Natural killer cell (primary cell): ENCODE measurements at regions of chr16 and their contacts with region 1.

Region 1: DNA sequence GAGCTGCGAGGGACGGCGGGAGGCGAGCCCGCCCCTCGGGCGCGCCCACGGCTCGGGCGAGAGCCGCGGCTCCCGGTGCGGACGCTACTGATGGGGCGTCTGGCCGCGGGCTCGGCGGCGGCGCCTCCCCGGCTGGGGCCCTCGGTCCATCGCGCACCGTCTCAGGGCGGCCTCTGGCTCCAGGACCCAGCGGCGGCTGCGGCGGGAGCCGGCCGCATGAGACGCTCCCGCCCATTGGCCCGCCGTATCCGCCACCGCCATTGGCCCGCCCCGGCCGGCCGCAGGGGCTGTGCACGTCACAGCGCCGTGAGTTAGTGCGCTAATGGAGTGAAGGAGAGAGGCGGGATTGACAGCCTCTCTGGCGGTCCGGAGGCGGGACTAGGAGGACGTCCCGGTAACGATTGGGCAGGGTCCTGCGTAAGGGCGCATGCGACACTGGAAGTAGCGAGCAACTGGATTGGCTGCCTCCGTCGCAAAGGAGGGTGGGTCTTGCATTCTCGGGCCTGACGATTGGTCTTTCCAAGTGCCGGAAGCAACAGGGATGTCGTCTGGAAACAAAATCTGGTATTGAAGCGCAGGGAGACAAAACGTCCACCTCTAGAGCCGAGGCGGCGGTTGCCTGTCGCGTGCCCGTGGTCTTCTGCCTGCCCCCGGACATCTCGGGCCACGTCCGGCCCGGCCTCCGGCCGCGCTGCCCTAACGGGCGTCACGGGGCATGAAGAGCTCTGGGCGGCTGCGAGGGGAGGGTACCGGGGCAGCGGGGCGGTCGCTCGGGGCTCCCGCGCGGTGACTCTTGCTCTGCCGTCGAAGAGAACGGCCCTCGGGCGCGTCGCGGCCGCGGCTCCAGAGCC is at the start of gene ANKRD11:
- DNase-seq: peak; percentile 98 to 100
- ATAC-seq: peak; percentile 84 to 95 (median 86)
- H3K4me3 ChIP-seq: peak within 1 kb of the TSS; percentile 51
- H3K4me3 Mint-ChIP-seq: peak within 1 kb of the TSS; percentile 95
- H3K27ac ChIP-seq: peak within 1 kb of the TSS; percentile 78
- H3K27ac Mint-ChIP-seq: peak within 1 kb of the TSS; percentile 97 to 98
- H3K4me1 ChIP-seq: peaks cover 42% of the 10 kb centered on the region
- H3K4me1 Mint-ChIP-seq: peaks cover 41 to 72% of the 10 kb centered on the region in 2 donors
- H3K27me3 ChIP-seq: no peaks in the 10 kb centered on the region
- H3K27me3 Mint-ChIP-seq: no peaks in the 10 kb centered on the region
- CTCF ChIP-seq: no peak
- total RNA-seq, gene ANKRD11: 230 to 299 (median 287) TPM

Region 2: DNA sequence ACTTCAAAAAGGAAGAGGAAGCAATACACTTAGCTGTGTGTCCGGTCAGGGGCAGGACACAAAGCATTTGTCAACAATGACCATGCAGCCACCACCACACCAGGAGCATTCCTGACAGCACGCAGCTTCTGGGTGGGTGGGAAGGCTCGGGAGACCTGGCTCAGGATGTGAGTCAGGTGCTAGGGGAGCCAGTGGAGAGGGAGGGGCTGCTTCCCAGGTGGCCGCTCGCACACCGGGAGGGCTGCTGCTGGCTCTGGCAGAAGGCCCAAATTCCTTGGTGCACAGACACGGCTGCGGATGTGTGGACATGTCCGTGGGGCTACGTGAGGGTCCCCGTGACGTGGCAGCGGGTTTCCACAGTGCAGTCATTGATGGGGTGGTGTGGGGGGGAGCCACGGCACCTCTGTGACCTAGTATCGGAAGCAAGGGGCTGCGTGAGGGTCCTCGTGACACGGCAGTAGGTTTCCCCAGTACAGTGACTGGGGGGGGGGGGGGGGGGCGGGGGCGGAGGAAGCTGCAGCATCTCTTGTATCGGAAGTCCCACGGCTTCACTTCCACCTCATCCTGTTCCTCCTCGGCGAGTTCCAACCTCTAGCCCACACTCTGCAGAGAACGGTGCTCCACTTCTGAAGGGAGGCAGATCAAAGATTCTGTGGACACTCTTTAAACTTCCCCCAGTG is 160.3 kb before region 1 on chr16:
- intact Hi-C with region 1: loop called (anchors 5 kb)
- DNase-seq: peak in 1 of 2 donors; percentile 80
- ATAC-seq: peak; percentile 12 to 42 (median 27)
- H3K4me3 ChIP-seq: no peak overlapping the region
- H3K4me3 Mint-ChIP-seq: peak overlapping the region; percentile 40
- H3K27ac ChIP-seq: peak overlapping the region; percentile 51
- H3K27ac Mint-ChIP-seq: peak overlapping the region; percentile 18 to 70
- H3K4me1 ChIP-seq: peaks cover 89% of the 10 kb centered on the region
- H3K4me1 Mint-ChIP-seq: peaks cover 77 to 78% of the 10 kb centered on the region in 2 donors
- H3K27me3 ChIP-seq: no peaks in the 10 kb centered on the region
- H3K27me3 Mint-ChIP-seq: no peaks in the 10 kb centered on the region
- CTCF ChIP-seq: no peak

Region 3: GRCh38 chr16:89409161-89409711 is 81.4 kb before region 1 on chr16:
- intact Hi-C with region 1: loop called (anchors 5 kb)
- DNase-seq: peak; percentile 63 to 89
- ATAC-seq: peak; percentile 72 to 82 (median 81)
- H3K4me3 ChIP-seq: no peak overlapping the region
- H3K4me3 Mint-ChIP-seq: peak overlapping the region; percentile 75
- H3K27ac ChIP-seq: peak overlapping the region; percentile 81
- H3K27ac Mint-ChIP-seq: peak overlapping the region; percentile 73 to 82
- H3K4me1 ChIP-seq: peaks cover 94% of the 10 kb centered on the region
- H3K4me1 Mint-ChIP-seq: peaks cover 80 to 85% of the 10 kb centered on the region in 2 donors
- H3K27me3 ChIP-seq: no peaks in the 10 kb centered on the region
- H3K27me3 Mint-ChIP-seq: no peaks in the 10 kb centered on the region
- CTCF ChIP-seq: no peak

Region 4: GRCh38 chr16:89507834-89508590 is 17.4 kb after region 1 on chr16 and contains the start of gene SPG7:
- intact Hi-C with region 1: loop called (anchors 1 kb)
- DNase-seq: peak; percentile 95 to 96
- ATAC-seq: peak; percentile 63 to 84 (median 75)
- H3K4me3 ChIP-seq: peak within 1 kb of the TSS; percentile 61
- H3K4me3 Mint-ChIP-seq: peak within 1 kb of the TSS; percentile 86
- H3K27ac ChIP-seq: peak within 1 kb of the TSS; percentile 91
- H3K27ac Mint-ChIP-seq: peak within 1 kb of the TSS; percentile 78 to 87
- H3K4me1 ChIP-seq: peaks cover 44% of the 10 kb centered on the region
- H3K4me1 Mint-ChIP-seq: peaks cover 26 to 28% of the 10 kb centered on the region in 2 donors
- H3K27me3 ChIP-seq: no peaks in the 10 kb centered on the region
- H3K27me3 Mint-ChIP-seq: no peaks in the 10 kb centered on the region
- CTCF ChIP-seq: no peak
- total RNA-seq, gene SPG7: 142 to 195 (median 180) TPM

Region 5: DNA sequence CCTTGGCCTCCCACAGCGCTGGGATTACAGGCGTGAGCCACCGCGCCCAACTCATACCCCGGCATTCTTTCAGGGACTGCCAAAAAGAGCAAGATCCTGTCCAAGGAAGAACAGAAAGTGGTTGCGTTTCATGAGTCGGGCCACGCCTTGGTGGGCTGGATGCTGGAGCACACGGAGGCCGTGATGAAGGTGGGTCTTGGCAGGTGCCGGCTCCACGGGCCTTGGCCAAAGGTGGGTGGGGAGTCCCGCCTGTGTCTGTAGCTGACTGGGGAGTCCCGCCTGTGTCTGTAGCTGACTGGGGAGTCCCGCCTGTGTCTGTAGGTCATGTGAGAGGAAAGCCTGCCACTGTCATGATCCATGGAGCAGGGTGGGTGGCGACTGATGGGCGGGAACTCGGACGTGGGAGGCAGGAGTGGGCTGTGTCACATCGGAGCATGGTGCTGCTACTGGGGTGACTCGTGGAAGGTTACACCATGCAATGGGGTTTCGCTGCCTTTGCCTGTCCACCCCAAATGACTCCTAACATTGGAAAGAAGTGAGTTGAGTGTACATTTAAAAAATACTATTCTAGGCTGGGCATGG is 59.9 kb after region 1 on chr16:
- intact Hi-C with region 1: no loop called
- DNase-seq: no peak
- ATAC-seq: no peak
- H3K4me3 ChIP-seq: no peak overlapping the region
- H3K4me3 Mint-ChIP-seq: no peak overlapping the region
- H3K27ac ChIP-seq: no peak overlapping the region
- H3K27ac Mint-ChIP-seq: no peak overlapping the region
- H3K4me1 ChIP-seq: no peaks in the 10 kb centered on the region
- H3K4me1 Mint-ChIP-seq: no peaks in the 10 kb centered on the region
- H3K27me3 ChIP-seq: no peaks in the 10 kb centered on the region
- H3K27me3 Mint-ChIP-seq: no peaks in the 10 kb centered on the region
- CTCF ChIP-seq: no peak

Region 6: GRCh38 chr16:89827383-89828198 is 337.0 kb after region 1 on chr16:
- intact Hi-C with region 1: no loop called
- DNase-seq: no peak
- ATAC-seq: no peak
- H3K4me3 ChIP-seq: no peak overlapping the region
- H3K4me3 Mint-ChIP-seq: peak overlapping the region; percentile 53
- H3K27ac ChIP-seq: no peak overlapping the region
- H3K27ac Mint-ChIP-seq: no peak overlapping the region
- H3K4me1 ChIP-seq: peaks cover 14% of the 10 kb centered on the region
- H3K4me1 Mint-ChIP-seq: peaks cover 7 to 9% of the 10 kb centered on the region in 2 donors
- H3K27me3 ChIP-seq: peaks cover 3% of the 10 kb centered on the region
- H3K27me3 Mint-ChIP-seq: peaks cover 5 to 6% of the 10 kb centered on the region in 2 donors
- CTCF ChIP-seq: no peak